ENCODE measurements at regions of chr4 and their contacts with region 1.

Region 1: DNA sequence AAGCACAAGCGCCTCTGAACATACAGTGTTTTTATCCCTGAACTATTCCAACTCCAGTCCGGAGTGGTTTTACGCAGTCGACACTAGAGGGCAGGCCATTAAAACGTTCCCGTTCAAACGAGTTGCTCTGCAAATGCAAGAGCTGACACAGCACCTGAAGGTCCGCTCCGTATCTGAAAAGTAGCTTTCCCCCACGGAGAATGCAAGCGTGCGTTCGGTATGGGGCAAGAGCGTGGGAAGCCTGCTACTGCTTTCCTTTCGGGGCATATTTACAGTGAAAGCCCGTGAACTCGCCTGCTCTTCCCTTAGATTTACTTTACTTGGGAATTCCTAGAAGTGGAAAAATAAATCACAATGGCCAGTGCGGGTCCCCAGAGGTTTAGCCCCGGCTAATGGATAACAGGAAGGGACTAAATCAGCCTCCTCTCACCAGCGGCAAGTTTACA is 190.8 kb downstream of the TSPAN5 start:
- DNase-seq: peak; percentile 31 to 84 (median 67)
- ATAC-seq: peak; percentile 91
- H3K4me3 ChIP-seq: peak overlapping the region; percentile 32 to 43
- H3K4me3 Mint-ChIP-seq: peak overlapping the region; percentile 77
- H3K27ac ChIP-seq: no peak overlapping the region
- H3K27ac Mint-ChIP-seq: no peak overlapping the region
- H3K4me1 ChIP-seq: peaks cover 14% of the 10 kb centered on the region
- H3K4me1 Mint-ChIP-seq: peaks cover 28% of the 10 kb centered on the region
- H3K27me3 ChIP-seq: no peaks in the 10 kb centered on the region
- H3K27me3 Mint-ChIP-seq: no peaks in the 10 kb centered on the region
- CTCF ChIP-seq: peak; percentile 68

Region 2: DNA sequence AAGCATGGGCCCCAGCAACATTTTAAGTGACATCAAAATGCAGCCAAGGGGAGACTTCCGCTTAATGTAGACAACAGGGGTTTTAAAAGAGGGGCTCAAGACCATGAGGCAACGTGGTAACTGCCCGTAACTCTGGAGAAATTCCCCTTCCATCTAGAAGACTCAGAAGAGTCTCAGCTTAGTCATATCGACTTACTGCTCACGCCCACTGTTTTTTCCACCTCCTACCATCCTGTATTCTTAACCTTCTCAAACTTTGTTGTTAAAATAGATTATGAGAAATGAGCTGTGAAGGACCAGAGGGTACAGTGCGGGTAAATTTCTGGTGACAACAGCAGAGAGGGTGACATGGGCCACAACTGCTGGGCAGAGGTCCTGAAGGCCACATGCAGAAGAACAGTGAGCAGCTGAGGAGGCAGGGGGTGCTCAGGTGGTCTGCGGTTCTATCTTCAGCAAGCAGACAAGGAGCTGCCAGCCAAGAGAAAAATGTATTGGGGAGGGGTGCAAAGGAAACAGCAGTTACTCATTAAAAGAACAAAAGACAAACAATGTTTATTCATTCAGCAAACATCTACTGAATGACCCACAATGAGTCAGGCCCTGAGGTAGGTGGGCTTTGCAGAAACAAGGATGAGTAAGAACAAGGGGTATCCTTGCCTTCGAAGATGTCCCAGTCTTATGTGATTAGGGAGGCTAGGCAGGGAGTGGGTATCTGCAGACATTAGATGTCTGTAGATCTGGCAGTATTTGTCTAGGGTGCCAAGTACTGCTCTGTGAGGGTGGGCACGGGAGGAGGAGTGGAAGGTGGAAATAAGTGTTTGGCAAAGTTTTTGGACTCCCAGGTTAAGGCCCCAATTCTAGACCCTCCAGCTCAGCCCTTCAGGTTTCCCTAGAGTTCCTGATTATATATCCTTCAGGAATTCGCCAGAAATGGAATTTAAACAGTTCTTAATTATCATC is 15.5 kb after region 1 on chr4:
- CTCF ChIA-PET with region 1: interaction called, 13 read pairs
- POLR2A ChIA-PET with region 1: no interaction called
- intact Hi-C with region 1: no loop called
- DNase-seq: no peak
- ATAC-seq: no peak
- H3K4me3 ChIP-seq: no peak overlapping the region
- H3K4me3 Mint-ChIP-seq: no peak overlapping the region
- H3K27ac ChIP-seq: no peak overlapping the region
- H3K27ac Mint-ChIP-seq: peak overlapping the region; percentile 6
- H3K4me1 ChIP-seq: no peaks in the 10 kb centered on the region
- H3K4me1 Mint-ChIP-seq: peaks cover 30% of the 10 kb centered on the region
- H3K27me3 ChIP-seq: no peaks in the 10 kb centered on the region
- H3K27me3 Mint-ChIP-seq: no peaks in the 10 kb centered on the region
- CTCF ChIP-seq: no peak

Region 3: GRCh38 chr4:98828801-98829200 is 361.2 kb after region 1 on chr4:
- CTCF ChIA-PET with region 1: interaction called, 12 read pairs
- POLR2A ChIA-PET with region 1: no interaction called
- intact Hi-C with region 1: loop called (anchors 1 kb)
- DNase-seq: peak in 7 of 9 experiments; percentile 14 to 56 (median 38)
- ATAC-seq: no peak
- H3K4me3 ChIP-seq: no peak overlapping the region
- H3K4me3 Mint-ChIP-seq: no peak overlapping the region
- H3K27ac ChIP-seq: no peak overlapping the region
- H3K27ac Mint-ChIP-seq: no peak overlapping the region
- H3K4me1 ChIP-seq: no peaks in the 10 kb centered on the region
- H3K4me1 Mint-ChIP-seq: no peaks in the 10 kb centered on the region
- H3K27me3 ChIP-seq: peaks cover 0 to 3% of the 10 kb centered on the region in 2 experiments
- H3K27me3 Mint-ChIP-seq: no peaks in the 10 kb centered on the region
- CTCF ChIP-seq: no peak

Region 4: DNA sequence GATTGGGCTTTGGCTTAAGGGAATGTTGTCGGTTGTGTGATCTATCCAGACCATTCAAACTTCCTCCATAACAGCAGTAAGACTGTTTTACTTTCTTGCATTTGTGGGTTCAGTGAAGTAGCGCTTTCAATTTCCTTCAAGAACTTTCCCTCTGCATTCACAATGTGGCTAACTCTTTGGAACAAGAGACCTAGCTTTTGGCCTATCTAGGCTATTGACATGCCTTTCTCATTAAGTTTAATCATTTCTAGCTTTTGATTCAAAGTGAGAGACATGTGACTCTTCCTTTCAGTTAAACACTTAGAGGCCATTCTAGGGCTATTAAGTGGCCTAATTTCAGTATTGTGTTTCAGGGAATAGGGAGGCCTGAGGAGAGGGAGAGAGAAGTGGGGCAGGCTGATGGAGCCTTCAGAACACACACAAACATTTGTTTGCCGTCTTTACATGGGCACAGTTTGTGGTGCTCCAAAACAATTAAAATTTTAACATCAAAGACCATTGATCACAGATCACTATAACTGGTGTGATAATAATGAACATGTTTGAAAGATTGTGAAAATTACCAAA is 586.9 kb after region 1 on chr4:
- CTCF ChIA-PET with region 1: interaction called, 9 read pairs
- POLR2A ChIA-PET with region 1: no interaction called
- intact Hi-C with region 1: loop called (anchors 1 to 5 kb)
- DNase-seq: no peak
- ATAC-seq: no peak
- H3K4me3 ChIP-seq: no peak overlapping the region
- H3K4me3 Mint-ChIP-seq: no peak overlapping the region
- H3K27ac ChIP-seq: peak overlapping the region in 1 of 2 experiments; percentile 15
- H3K27ac Mint-ChIP-seq: peak overlapping the region; percentile 42
- H3K4me1 ChIP-seq: peaks cover 3% of the 10 kb centered on the region
- H3K4me1 Mint-ChIP-seq: peaks cover 7% of the 10 kb centered on the region
- H3K27me3 ChIP-seq: no peaks in the 10 kb centered on the region
- H3K27me3 Mint-ChIP-seq: no peaks in the 10 kb centered on the region
- CTCF ChIP-seq: no peak

Region 5: DNA sequence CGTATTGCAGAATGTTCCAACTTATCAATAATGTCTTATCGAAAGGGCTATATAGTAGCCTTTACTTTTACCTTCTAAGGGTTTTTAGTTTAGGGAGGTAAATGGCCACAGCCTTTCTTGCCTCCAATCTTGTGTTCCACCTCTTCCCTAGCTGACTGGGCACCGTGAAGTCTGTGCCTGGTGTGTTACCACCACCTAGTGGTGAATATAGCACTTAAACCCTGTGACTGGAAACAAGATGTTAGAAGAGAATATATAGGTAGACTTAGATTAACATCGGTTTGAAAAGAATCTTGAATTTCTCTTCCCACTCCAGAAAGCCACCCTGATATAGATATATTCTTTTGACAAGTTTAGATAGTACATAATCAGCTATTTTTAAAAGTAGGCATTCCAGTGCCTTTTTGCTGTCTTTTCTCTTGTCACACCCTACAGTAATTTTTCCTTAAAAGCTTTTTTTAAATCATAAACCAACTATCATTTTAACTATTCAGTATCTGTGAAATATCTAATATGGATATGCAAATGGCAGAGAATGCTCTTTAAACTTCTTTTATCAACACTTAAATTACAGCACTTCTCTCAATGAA is 995.3 kb after region 1 on chr4:
- CTCF ChIA-PET with region 1: interaction called, 7 read pairs
- POLR2A ChIA-PET with region 1: no interaction called
- intact Hi-C with region 1: loop called (anchors 1 to 2 kb)
- DNase-seq: peak; percentile 3 to 64 (median 38)
- ATAC-seq: peak; percentile 67
- H3K4me3 ChIP-seq: no peak overlapping the region
- H3K4me3 Mint-ChIP-seq: no peak overlapping the region
- H3K27ac ChIP-seq: no peak overlapping the region
- H3K27ac Mint-ChIP-seq: no peak overlapping the region
- H3K4me1 ChIP-seq: no peaks in the 10 kb centered on the region
- H3K4me1 Mint-ChIP-seq: no peaks in the 10 kb centered on the region
- H3K27me3 ChIP-seq: peaks cover 0 to 2% of the 10 kb centered on the region in 2 experiments
- H3K27me3 Mint-ChIP-seq: peaks cover 13% of the 10 kb centered on the region
- CTCF ChIP-seq: peak; percentile 75

Measured in CD8-positive, alpha-beta T cell (primary cell).